ENCODE measurements at regions of chr10 and their contacts with region 1.

Region 1: GRCh38 chr10:99732033-99732912 is at the starts of genes COX15 and CUTC:
- DNase-seq: peak; percentile 94
- H3K4me3 Mint-ChIP-seq: peak within 1 kb of the TSS; percentile 99
- H3K27ac Mint-ChIP-seq: peak within 1 kb of the TSS; percentile 99
- H3K4me1 Mint-ChIP-seq: peaks cover 24% of the 10 kb centered on the region
- H3K27me3 Mint-ChIP-seq: no peaks in the 10 kb centered on the region
- total RNA-seq, gene COX15: 33.9 and 35.2 TPM in 2 replicates
- total RNA-seq, gene CUTC: 34.4 and 35.5 TPM in 2 replicates

Region 2: DNA sequence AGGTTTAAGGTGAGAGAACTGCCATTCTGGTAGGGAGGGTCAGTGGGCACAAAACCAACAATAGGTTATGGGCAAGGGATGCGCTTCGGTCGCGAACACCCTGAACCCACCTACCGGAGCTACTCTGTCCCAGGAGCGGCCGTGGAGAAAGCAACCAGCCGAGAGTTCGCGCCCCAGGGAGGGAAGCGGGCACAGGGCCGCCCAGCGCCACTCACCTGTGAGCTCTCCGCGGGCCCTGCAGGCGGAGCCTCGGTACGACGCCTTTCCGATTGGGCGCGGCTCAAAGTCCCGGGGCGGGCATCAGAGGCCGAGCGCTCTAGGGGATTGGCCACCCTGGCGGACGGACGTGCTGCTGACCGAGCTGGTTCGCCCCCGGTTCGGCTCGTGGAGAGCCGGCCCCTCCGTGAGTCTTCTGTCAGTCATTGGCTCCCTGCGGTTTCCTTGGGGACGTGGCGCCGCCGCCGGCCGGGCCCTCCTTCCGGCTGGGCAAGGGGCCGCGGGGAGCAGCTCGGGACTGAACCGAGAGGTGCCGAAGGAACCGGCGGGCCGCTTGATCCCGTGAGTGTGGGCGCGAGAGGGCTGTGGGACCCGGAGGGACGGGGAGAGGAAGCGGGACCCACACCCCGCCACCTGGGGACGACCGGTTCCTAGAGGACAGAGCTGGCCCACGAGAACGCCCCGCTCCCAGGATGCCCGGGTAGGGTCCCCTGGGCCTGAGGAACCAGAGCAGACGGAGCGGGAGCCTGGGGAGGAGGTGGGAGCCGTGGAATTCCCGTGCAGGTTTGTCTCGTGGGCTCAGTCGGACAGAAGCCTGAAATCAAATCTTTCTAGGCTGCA is 73.0 kb before region 1 on chr10 and contains the start of gene ENTPD7:
- intact Hi-C with region 1: loop called (anchors 1 kb)
- DNase-seq: peak; percentile 90
- H3K4me3 Mint-ChIP-seq: peak within 1 kb of the TSS; percentile 96
- H3K27ac Mint-ChIP-seq: peak within 1 kb of the TSS; percentile 91
- H3K4me1 Mint-ChIP-seq: peaks cover 18% of the 10 kb centered on the region
- H3K27me3 Mint-ChIP-seq: peaks cover 19% of the 10 kb centered on the region
- total RNA-seq, gene ENTPD7: 7.5 and 8.2 TPM in 2 replicates

Region 3: GRCh38 chr10:99743841-99744240 is 11.6 kb after region 1 on chr10:
- intact Hi-C with region 1: no loop called
- DNase-seq: no peak
- H3K4me3 Mint-ChIP-seq: no peak overlapping the region
- H3K27ac Mint-ChIP-seq: peak overlapping the region; percentile 18
- H3K4me1 Mint-ChIP-seq: peaks cover 12% of the 10 kb centered on the region
- H3K27me3 Mint-ChIP-seq: no peaks in the 10 kb centered on the region